GM12878 (cell line): ENCODE measurements at regions of chr2 and their contacts with region 1.

Region 1: GRCh38 chr2:216057688-216058193 is 23.9 kb downstream of the PECR start:
- DNase-seq: peak; percentile 96
- ATAC-seq: peak; percentile 93
- H3K4me3 ChIP-seq: peak overlapping the region; percentile 62
- H3K27ac ChIP-seq: peak overlapping the region; percentile 85
- H3K4me1 ChIP-seq: peaks cover 24% of the 10 kb centered on the region
- H3K27me3 ChIP-seq: no peaks in the 10 kb centered on the region
- CTCF ChIP-seq: no peak
- EP300 ChIP-seq: peak; percentile 55 to 66; a peak in 2 of 4 replicates
- POLR2A ChIP-seq: peak; percentile 68; the same call in 1 of the 2 replicates
- RAD21 ChIP-seq: no peak

Region 2: GRCh38 chr2:216006164-216006663 is 51.5 kb before region 1 on chr2:
- CTCF ChIA-PET with region 1: interaction called, 4 read pairs
- POLR2A ChIA-PET with region 1: interaction called, 11 read pairs
- RAD21 ChIA-PET with region 1: interaction called, 3 read pairs
- SMC1A ChIA-PET with region 1: interaction called, 7 read pairs
- in situ Hi-C with region 1: no loop called
- intact Hi-C with region 1: no loop called
- DNase-seq: peak; percentile 73
- ATAC-seq: peak; percentile 40
- H3K4me3 ChIP-seq: peak overlapping the region; percentile 61
- H3K27ac ChIP-seq: peak overlapping the region; percentile 90
- H3K4me1 ChIP-seq: peaks cover 55% of the 10 kb centered on the region
- H3K27me3 ChIP-seq: no peaks in the 10 kb centered on the region
- CTCF ChIP-seq: no peak
- EP300 ChIP-seq: peak in 1 of 2 experiments; percentile 60; a peak in 2 of 4 replicates
- POLR2A ChIP-seq: peak; percentile 41; the same call in 1 of the 2 replicates
- RAD21 ChIP-seq: peak; percentile 3; the same call in 1 of the 2 replicates

Region 3: DNA sequence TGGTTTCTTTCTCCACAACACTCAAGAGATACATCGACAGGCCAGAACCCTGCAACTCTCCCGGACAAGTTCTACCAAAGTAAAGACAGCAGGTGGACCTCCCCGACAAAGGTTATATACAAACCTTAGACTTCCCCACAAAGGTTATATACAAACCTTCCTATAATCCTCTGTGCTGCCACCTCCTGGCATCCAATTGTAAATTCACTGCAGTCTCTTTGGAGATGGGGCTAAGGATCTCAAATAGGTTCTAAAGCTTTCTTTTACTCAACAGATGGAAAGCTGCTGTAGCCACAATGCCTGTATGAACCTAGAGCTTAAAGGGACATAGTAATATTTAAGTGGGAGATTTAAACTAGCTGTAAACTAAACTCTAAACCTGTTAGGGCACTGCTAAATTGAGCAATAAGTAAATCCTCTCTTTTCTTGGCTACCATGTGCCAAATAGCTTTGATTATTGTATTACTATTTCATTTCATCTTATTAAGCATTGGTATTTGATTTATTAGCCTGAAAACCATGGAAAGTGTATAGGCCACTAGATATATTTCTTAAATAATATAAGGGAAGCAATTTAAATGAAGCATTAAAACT is 34.6 kb before region 1 on chr2:
- CTCF ChIA-PET with region 1: interaction called, 19 read pairs
- POLR2A ChIA-PET with region 1: interaction called, 3 read pairs
- RAD21 ChIA-PET with region 1: no interaction called
- SMC1A ChIA-PET with region 1: interaction called, 13 read pairs
- in situ Hi-C with region 1: no loop called
- intact Hi-C with region 1: no loop called
- DNase-seq: no peak
- ATAC-seq: peak; percentile 97
- H3K4me3 ChIP-seq: no peak overlapping the region
- H3K27ac ChIP-seq: no peak overlapping the region
- H3K4me1 ChIP-seq: no peaks in the 10 kb centered on the region
- H3K27me3 ChIP-seq: no peaks in the 10 kb centered on the region
- CTCF ChIP-seq: peak; percentile 70 to 73 (median 71)
- EP300 ChIP-seq: no peak
- POLR2A ChIP-seq: no peak
- RAD21 ChIP-seq: peak; percentile 89

Region 4: DNA sequence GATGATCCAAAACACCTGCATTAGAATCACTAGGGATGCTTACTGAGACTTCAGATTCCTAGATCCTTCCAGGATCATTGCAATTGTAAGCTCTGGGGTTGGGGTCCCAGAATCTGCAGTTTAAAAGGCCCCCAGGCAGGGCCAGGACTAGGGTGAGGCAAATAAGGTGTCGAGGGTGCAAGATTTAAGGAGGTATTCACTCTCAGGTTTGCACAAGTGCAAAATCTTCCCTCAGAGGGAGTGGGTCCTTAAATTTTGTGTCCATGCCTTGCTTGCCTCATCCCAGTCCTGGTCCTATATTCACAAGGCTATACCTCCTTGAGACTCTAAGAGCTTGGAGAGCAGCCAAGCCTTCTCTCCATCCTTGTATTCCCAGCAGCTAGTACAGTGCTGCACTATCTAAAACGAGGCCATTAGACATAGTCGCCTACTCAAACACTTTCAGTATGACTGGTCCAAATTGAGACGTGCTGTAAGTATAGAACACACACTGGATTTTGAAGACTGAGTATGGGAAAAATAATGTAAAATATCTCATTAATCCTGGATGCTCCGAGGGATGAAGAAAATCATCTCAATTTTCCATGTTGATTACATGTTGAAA is 12.8 kb before region 1 on chr2:
- CTCF ChIA-PET with region 1: interaction called, 17 read pairs
- POLR2A ChIA-PET with region 1: interaction called, 5 read pairs
- RAD21 ChIA-PET with region 1: interaction called, 22 read pairs
- SMC1A ChIA-PET with region 1: interaction called, 26 read pairs
- in situ Hi-C with region 1: no loop called
- intact Hi-C with region 1: no loop called
- DNase-seq: no peak
- ATAC-seq: peak; percentile 97
- H3K4me3 ChIP-seq: no peak overlapping the region
- H3K27ac ChIP-seq: peak overlapping the region; percentile 1; the same call in 1 of the 2 replicates
- H3K4me1 ChIP-seq: peaks cover 10% of the 10 kb centered on the region
- H3K27me3 ChIP-seq: no peaks in the 10 kb centered on the region
- CTCF ChIP-seq: no peak
- EP300 ChIP-seq: peak in 1 of 2 experiments; percentile 48; a peak in 1 of 4 replicates
- POLR2A ChIP-seq: no peak
- RAD21 ChIP-seq: 0 out of 2 replicates have a peak, but pooled peaks have one; percentile 6

Region 5: GRCh38 chr2:216074794-216075193 is 17.1 kb after region 1 on chr2:
- CTCF ChIA-PET with region 1: interaction called, 5 read pairs
- POLR2A ChIA-PET with region 1: interaction called, 3 read pairs
- RAD21 ChIA-PET with region 1: interaction called, 3 read pairs
- SMC1A ChIA-PET with region 1: interaction called, 12 read pairs
- in situ Hi-C with region 1: no loop called
- intact Hi-C with region 1: no loop called
- DNase-seq: no peak
- ATAC-seq: no peak
- H3K4me3 ChIP-seq: no peak overlapping the region
- H3K27ac ChIP-seq: no peak overlapping the region
- H3K4me1 ChIP-seq: no peaks in the 10 kb centered on the region
- H3K27me3 ChIP-seq: no peaks in the 10 kb centered on the region
- CTCF ChIP-seq: no peak
- EP300 ChIP-seq: no peak
- POLR2A ChIP-seq: no peak
- RAD21 ChIP-seq: no peak

Region 6: GRCh38 chr2:216081487-216082116 is 23.9 kb after region 1 on chr2 and contains the starts of genes PECR and TMEM169:
- CTCF ChIA-PET with region 1: interaction called, 7 read pairs
- POLR2A ChIA-PET with region 1: interaction called, 8 read pairs
- RAD21 ChIA-PET with region 1: interaction called, 15 read pairs
- SMC1A ChIA-PET with region 1: interaction called, 13 read pairs
- in situ Hi-C with region 1: no loop called
- intact Hi-C with region 1: loop called (anchors 2 kb)
- DNase-seq: no peak
- ATAC-seq: peak; percentile 97
- H3K4me3 ChIP-seq: peak within 1 kb of the TSS; percentile 84
- H3K27ac ChIP-seq: peak within 1 kb of the TSS; percentile 58
- H3K4me1 ChIP-seq: peaks cover 6% of the 10 kb centered on the region; the same call in 1 of the 2 replicates
- H3K27me3 ChIP-seq: no peaks in the 10 kb centered on the region
- CTCF ChIP-seq: no peak
- EP300 ChIP-seq: no peak
- POLR2A ChIP-seq: peak; percentile 94
- RAD21 ChIP-seq: no peak
- polyA plus RNA-seq, gene PECR: 7.6 to 10.4 TPM
- polyA plus RNA-seq, gene TMEM169: 0.57 to 1.2 TPM